ENCODE measurements at regions of chr1 and their contacts with region 1.

Region 1: DNA sequence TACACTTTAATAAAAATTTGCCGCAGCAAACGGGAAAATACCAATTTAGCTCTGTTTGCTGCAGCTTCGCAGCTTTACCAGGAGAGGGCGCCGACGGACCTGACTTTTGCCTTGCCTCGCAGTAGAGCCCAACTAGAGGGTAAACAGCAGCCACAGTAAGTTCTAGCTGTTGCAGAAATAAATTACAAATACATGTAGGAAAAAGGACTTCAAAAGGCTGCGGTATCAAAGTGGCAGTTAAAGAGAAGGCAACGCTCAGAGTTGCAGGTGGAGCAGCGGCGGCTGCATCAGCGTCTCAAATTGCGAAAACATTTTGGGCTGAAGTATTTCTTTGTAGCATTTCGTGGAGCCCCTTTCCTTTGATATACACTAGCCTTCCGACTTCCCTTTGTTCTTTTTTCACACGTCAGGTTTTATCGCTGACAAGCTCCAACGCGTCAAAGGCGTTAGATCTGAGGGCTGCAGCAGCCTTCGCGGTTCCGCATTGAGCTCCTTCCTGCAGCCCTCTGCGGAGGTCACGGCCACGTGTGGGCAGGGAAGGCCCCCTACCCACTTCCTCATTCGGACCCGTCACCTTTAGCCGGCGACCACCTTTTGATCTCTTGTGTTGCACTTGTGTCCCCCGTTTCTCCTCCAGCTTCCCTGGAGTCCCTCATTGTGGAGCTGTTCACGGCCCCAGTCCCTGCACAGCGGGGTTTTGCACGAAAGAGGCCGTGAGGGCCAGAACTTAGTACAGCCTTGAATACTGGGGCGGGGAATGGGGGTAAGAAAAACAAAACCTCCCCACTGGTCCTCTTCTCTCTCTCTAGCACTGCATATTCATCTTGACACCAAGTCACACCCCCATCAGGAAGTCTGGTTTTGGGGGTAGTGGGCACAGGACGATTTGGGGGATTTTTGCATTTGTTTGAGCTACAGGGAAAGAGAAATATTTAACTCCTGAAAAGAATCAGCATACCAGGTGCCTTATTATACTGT is 72.8 kb downstream of the S1PR1 start:
- DNase-seq: peak; percentile 70
- H3K4me3 ChIP-seq: peak overlapping the region; percentile 18
- H3K27ac ChIP-seq: no peak overlapping the region
- H3K4me1 ChIP-seq: peaks cover 24% of the 10 kb centered on the region
- CTCF ChIP-seq: peak; percentile 94

Region 2: DNA sequence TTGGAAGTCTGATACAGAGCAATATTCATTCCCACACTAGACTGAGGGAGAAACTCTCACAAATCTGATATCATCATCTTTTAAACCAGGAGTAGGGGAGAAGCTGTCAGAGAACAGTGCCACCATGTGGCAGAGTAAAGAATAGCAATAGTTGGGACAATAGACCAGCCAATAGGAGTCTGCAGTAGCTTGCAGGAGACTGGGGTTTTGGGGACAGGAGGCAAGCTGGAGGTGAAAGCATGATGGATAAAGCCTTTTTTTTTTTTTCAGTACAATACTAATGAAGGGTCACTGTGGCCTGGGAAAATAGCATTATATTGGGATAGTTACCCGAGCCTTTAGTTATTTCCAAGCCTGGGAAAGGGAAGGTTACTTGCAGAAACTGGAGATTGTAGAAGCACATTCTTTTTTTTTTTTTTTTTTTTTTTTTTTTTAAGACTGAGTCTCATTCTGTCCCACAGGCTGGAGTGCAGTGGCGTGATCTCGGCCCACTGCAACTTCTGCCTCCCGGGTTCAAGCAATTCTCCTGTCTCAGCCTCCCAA is 47.9 kb after region 1 on chr1:
- CTCF ChIA-PET with region 1: no interaction called
- POLR2A ChIA-PET with region 1: interaction called, 9 read pairs
- intact Hi-C with region 1: loop called (anchors 1 kb)
- DNase-seq: peak; percentile 77
- H3K4me3 ChIP-seq: no peak overlapping the region
- H3K27ac ChIP-seq: no peak overlapping the region
- H3K4me1 ChIP-seq: no peaks in the 10 kb centered on the region
- CTCF ChIP-seq: peak; percentile 95

Measured in OCI-LY7 (cell line).